ENCODE measurements at regions of chr12 and their contacts with region 1.

Region 1: GRCh38 chr12:113334786-113335540 is at the start of gene SLC8B1:
- DNase-seq: peak; percentile 94
- H3K4me3 ChIP-seq: peak within 1 kb of the TSS; percentile 49 to 80 (median 74)
- H3K27ac ChIP-seq: peak within 1 kb of the TSS; percentile 73 to 77 (median 74)
- H3K4me1 ChIP-seq: peaks cover 0 to 24% (median 16%) of the 10 kb centered on the region in 4 donors
- H3K27me3 ChIP-seq: no peaks in the 10 kb centered on the region
- CTCF ChIP-seq: no peak
- EP300 ChIP-seq: no peak
- POLR2A ChIP-seq: peak; percentile 56 to 60
- total RNA-seq, gene SLC8B1: 13.6 to 31.3 (median 23.4) TPM

Region 2: DNA sequence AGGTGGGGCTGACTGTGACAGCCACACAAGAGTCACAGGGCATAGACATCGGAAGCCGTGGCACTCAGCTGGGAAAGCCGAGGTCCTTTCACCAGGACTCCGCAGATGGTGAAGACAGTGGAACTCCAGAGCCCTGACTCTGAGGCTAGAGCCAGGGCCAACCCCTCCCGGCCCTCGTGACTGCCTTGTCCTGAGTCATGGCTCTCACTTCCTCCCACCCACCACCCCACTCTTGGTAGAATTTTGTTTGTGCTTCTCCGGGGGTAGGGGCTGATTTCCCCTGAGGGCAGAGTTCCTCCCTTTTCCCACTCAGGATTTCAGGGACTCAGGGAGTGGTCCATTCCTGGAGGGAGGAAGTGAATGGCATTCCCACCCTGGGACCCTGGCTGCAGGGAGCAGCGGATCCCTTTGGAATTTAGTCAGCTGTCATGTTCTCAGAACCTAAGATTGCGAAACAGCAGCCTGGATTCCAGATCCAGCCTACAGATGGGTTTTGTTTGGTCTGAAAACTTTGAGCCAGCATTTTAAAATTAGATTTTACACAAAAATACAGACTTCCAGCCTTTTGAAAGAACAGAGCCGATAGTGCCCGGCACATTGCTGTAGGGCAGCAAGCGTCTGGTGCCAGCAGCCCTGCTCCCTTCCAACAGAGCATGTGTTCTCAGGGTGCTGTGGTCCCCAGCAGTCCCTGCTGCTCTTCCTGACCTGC is 63.0 kb before region 1 on chr12:
- intact Hi-C with region 1: no loop called
- DNase-seq: peak; percentile 94
- H3K4me3 ChIP-seq: no peak overlapping the region
- H3K27ac ChIP-seq: peak overlapping the region; percentile 57 to 72 (median 70)
- H3K4me1 ChIP-seq: peaks cover 0 to 25% (median 21%) of the 10 kb centered on the region in 4 donors
- H3K27me3 ChIP-seq: no peaks in the 10 kb centered on the region
- CTCF ChIP-seq: no peak
- EP300 ChIP-seq: no peak
- POLR2A ChIP-seq: no peak

Region 3: DNA sequence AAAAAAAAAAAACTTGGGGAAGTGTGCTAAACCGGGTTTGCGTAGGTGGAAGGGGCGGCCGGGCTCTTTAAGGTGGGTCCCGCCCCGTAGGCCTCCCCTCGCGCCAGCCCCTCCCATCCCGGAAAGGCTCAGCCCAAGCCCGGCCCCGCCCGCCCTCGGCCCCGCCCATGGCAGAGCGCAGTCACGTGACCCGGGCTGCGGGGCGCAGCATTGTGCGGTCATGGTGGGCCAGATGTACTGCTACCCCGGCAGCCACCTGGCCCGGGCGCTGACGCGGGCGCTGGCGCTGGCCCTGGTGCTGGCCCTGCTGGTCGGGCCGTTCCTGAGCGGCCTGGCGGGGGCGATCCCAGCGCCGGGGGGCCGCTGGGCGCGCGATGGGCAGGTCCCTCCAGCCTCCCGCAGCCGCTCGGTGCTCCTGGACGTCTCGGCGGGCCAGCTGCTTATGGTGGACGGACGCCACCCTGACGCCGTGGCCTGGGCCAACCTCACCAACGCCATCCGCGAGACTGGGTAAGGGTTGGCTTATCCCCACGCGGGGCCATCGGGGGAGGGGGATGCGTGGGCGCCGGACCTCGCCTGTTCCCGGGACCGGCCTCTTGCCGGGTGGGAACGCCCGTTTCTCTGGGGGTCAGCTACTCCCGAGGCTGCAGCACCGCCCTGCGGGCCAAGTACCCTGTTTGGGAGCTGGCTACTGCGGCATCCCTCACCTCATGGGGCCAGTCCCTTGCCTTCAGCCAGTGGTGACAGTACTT is 23.6 kb after region 1 on chr12 and contains the start of gene PLBD2:
- intact Hi-C with region 1: loop called (anchors 1 kb)
- DNase-seq: peak; percentile 97
- H3K4me3 ChIP-seq: peak within 1 kb of the TSS; percentile 47 to 90 (median 86)
- H3K27ac ChIP-seq: peak within 1 kb of the TSS; percentile 85 to 91 (median 88)
- H3K4me1 ChIP-seq: peaks cover 0 to 21% (median 14%) of the 10 kb centered on the region in 4 donors
- H3K27me3 ChIP-seq: no peaks in the 10 kb centered on the region
- CTCF ChIP-seq: no peak
- EP300 ChIP-seq: no peak
- POLR2A ChIP-seq: no peak
- total RNA-seq, gene PLBD2: 13.2 to 39.1 (median 16.4) TPM

Region 4: DNA sequence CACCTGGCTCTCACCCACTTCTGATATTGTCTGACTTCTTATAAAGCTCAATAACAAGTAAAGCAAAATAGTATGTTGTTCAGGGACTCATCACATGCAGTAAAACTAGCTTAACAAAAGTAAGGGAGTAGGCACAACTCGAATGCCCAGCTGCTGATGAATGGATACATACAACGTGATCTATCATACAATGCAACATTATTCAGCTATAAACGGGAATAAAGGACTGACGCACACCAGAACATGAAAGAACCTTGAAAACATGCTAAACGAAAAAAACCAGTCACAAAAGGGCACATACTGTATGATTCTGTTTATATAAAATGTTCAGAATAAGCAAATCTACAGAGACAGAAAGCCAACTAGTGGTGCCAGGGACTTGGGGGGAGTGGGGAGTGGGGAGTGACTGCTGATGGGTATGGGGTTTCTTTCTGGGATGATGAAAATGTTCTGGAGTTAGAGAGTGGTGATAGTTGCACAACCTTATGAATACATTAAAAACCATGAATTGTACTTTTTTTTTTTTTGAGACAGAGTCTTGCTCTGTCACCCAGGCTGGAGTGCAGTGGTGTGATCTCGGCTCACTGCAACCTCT is 34.5 kb after region 1 on chr12:
- intact Hi-C with region 1: no loop called
- DNase-seq: no peak
- H3K4me3 ChIP-seq: no peak overlapping the region
- H3K27ac ChIP-seq: no peak overlapping the region
- H3K4me1 ChIP-seq: no peaks in the 10 kb centered on the region
- H3K27me3 ChIP-seq: no peaks in the 10 kb centered on the region
- CTCF ChIP-seq: no peak
- EP300 ChIP-seq: no peak
- POLR2A ChIP-seq: no peak

Measured in sigmoid colon (tissue), 7 donors.